ENCODE measurements at regions of chr4 and their contacts with region 1.

Region 1: DNA sequence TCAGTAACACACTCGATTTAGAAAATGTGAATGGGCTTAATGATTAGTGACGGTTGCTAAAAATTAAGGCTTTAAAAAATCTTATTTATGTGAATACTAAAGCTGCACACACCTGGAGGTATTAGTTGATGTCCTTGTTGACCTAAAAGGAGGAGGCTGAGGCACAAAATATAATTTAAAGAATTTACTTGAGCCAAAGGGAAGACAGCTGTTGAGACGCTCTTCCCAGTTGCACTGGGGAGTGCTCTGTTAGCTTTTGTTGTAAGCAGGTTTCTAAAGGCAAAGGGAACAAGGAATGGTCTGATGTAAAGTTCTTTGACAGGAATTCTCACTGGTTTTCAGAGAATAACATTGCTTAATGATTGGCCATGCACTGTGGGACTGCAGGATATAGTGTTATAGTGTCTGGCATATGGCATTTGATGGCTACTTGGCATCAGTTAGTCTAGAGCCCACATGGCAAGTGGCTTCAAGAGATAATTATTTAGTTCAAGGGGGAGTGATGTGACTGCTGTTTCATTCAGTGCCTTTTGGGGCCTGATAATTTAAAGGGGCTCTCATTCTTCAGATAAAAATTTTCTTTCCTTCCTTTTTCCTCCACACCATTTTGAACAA is 30.8 kb upstream of the PGM2 start:
- DNase-seq: no peak
- H3K4me3 ChIP-seq: no peak overlapping the region
- H3K27me3 ChIP-seq: peaks cover 3% of the 10 kb centered on the region; the same call in 1 of the 2 replicates
- CTCF ChIP-seq: no peak

Region 2: DNA sequence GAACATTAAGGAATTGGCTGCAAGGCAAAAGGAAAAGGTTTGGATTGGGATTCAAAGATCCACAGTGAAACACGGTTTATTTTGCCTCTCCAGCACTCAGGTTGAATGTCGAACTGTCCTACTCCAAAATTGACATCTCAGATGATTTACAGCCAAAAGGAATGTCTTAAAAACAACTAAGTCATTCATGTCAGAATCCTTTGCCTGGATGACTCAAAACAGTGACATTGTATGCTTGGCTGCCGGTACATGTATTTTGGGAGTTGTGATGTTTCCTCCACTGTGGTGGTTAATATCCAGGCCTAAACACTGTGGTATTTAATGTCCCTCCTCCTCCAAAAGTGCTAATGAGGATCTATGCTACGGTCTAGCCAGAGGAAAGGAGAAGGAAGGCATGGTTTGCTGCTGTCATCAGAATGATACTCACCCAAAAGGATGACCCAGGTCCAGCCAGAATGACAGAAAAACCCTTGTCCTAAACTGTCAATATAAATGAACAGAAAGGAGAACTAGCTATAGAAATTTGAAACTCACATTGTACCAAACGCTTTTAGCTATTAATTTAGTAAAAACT is 51.7 kb after region 1 on chr4:
- CTCF ChIA-PET with region 1: no interaction called
- POLR2A ChIA-PET with region 1: interaction called, 11 read pairs
- DNase-seq: no peak
- H3K4me3 ChIP-seq: no peak overlapping the region
- H3K27me3 ChIP-seq: no peaks in the 10 kb centered on the region
- CTCF ChIP-seq: no peak

Region 3: DNA sequence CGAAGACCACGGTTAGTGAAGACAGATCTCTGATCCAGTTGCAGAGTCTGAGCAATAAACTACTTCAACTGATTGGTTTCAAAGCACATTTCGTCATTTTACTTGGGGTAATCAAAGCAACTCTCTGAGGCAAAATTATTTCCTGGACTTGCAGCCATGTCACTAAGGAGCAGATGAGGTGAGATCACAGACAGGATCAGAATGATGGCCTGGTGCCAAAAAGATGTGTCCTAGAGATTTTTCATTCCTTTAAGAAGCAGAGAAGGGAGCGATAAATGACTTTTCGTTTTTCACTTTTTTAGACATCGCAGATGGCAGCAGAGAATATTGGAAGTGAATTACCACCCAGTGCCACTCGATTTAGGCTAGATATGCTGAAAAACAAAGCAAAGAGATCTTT is 248.4 kb after region 1 on chr4:
- CTCF ChIA-PET with region 1: no interaction called
- POLR2A ChIA-PET with region 1: no interaction called
- DNase-seq: no peak
- H3K4me3 ChIP-seq: no peak overlapping the region
- H3K27me3 ChIP-seq: no peaks in the 10 kb centered on the region
- CTCF ChIP-seq: no peak

Region 4: GRCh38 chr4:38371391-38371851 is 575.7 kb after region 1 on chr4:
- CTCF ChIA-PET with region 1: no interaction called
- POLR2A ChIA-PET with region 1: no interaction called
- DNase-seq: peak; percentile 24
- H3K4me3 ChIP-seq: no peak overlapping the region
- H3K27me3 ChIP-seq: no peaks in the 10 kb centered on the region
- CTCF ChIP-seq: no peak

Measured in BJ (cell line).